A549 (cell line): ENCODE measurements at regions of chr3 and their contacts with region 1.

Region 1: DNA sequence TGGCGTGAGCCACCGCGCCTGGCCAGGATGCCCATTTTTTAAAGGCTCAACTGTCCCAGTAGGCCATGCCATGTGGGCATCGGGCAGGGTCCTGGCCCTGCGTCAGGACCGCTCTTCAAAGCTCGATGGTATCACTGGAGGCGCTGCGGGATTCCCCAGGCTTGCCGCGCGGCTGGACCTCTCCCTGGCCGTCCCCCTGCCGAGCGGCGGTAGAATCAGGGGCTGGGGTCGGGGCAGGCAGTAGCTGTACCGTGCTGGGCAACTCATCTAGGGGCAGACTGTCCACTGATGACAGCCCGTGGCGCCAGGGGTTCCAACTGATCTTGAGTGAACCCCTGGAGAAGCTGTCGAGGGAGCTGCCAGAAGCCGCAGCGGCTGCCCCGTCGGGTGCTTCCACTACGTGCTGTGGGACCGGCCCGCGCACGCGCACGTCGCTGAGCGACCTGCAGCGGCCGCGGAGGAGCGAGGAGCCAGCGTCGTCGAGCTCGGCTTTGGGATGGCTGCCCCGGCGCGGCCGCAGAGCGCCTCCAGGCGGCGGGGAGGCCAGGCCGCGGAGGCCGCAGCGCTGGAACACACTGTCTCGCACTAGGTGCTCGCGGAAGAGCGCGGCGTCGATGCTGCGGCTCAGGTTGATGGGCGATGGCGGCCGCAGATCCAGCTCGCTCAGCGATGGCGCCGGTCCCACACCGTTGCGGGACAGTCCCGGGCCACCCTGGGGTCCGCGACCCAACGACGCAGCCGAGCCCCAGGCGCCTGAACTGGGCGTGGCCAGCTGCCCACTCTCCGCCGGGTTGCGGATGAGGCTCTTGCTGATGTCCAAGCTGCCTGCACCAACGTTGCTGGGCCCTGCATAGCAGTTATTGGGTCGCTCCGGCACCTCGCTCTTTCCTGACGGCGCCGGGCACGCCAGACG is 5.8 kb downstream of the PRRT3 start:
- DNase-seq: peak; percentile 89 to 95
- ATAC-seq: peak; percentile 77 to 91
- H3K4me3 ChIP-seq: peak overlapping the region; percentile 80
- H3K27ac ChIP-seq: peak overlapping the region; percentile 95 to 98
- H3K4me1 ChIP-seq: peaks cover 10% of the 10 kb centered on the region; the same call in 1 of the 3 replicates
- CTCF ChIP-seq: peak; percentile 79
- EP300 ChIP-seq: no peak
- POLR2A ChIP-seq: peak; percentile 70
- RAD21 ChIP-seq: peak; percentile 72 to 73; a peak in 4 of 5 replicates

Region 2: GRCh38 chr3:9715764-9716437 is 230.5 kb before region 1 on chr3:
- CTCF ChIA-PET with region 1: interaction called, 12 read pairs
- POLR2A ChIA-PET with region 1: interaction called, 3 read pairs
- DNase-seq: peak; percentile 78 to 86
- ATAC-seq: peak; percentile 95 to 97
- H3K4me3 ChIP-seq: no peak overlapping the region
- H3K27ac ChIP-seq: peak overlapping the region in 1 of 2 experiments; percentile 32; a peak in 1 of 6 replicates
- H3K4me1 ChIP-seq: peaks cover 11% of the 10 kb centered on the region; the same call in 2 of the 3 replicates
- CTCF ChIP-seq: peak; percentile 87
- EP300 ChIP-seq: no peak
- POLR2A ChIP-seq: no peak
- RAD21 ChIP-seq: peak; percentile 89 to 91

Region 3: GRCh38 chr3:9843715-9844438 is 102.5 kb before region 1 on chr3 and contains the start of gene RPUSD3:
- CTCF ChIA-PET with region 1: interaction called, 55 read pairs
- POLR2A ChIA-PET with region 1: interaction called, 11 read pairs
- DNase-seq: peak; percentile 95 to 99
- ATAC-seq: peak; percentile 95 to 98
- H3K4me3 ChIP-seq: peak within 1 kb of the TSS; percentile 79
- H3K27ac ChIP-seq: peak within 1 kb of the TSS; percentile 85 to 89
- H3K4me1 ChIP-seq: peaks cover 11% of the 10 kb centered on the region; the same call in 2 of the 3 replicates
- CTCF ChIP-seq: no peak
- EP300 ChIP-seq: no peak
- POLR2A ChIP-seq: peak; percentile 82
- RAD21 ChIP-seq: 0 out of 5 replicates have a peak, but pooled peaks of 1 of the 2 experiments have one; percentile 14
- polyA plus RNA-seq, gene RPUSD3: 38.9 and 47.1 TPM in 2 replicates

Region 4: DNA sequence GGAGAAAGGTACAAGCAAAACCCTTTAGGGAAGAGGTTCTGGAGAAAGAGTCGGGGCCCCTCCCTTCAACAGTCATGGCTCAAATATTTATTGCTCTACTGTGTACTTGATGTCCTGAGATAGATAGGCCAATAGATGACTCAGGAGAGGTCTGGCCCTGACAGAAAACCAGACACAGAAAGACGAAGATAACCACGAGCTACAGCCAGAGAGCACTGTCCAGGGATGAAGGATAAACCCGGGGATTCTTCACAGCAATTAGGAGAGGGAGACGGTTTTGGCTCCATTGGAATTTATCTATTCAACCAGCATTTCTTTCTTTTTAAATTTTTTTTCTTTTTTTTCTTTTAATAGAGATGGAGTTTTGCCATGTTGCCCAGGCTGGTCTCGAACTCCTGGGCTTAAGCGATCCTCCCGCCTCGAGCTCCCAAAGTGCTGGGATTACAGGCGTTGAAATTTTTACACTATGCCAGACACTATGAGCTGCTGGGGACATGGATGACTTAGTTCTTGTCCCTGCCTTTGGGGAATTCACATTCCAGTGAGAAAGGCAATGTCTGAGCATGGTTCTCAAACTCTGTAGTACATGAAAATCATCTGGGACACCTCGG is 61.7 kb before region 1 on chr3:
- CTCF ChIA-PET with region 1: interaction called, 20 read pairs
- POLR2A ChIA-PET with region 1: interaction called, 14 read pairs
- DNase-seq: peak; percentile 93 to 96
- ATAC-seq: peak; percentile 98 to 99
- H3K4me3 ChIP-seq: no peak overlapping the region
- H3K27ac ChIP-seq: peak overlapping the region; percentile 88 to 89
- H3K4me1 ChIP-seq: peaks cover 31% of the 10 kb centered on the region
- CTCF ChIP-seq: no peak
- EP300 ChIP-seq: no peak
- POLR2A ChIP-seq: no peak
- RAD21 ChIP-seq: peak in 1 of 2 experiments; percentile 22; a peak in 1 of 5 replicates

Region 5: GRCh38 chr3:9915254-9916141 is 30.9 kb before region 1 on chr3:
- CTCF ChIA-PET with region 1: interaction called, 14 read pairs
- POLR2A ChIA-PET with region 1: interaction called, 5 read pairs
- DNase-seq: no peak
- ATAC-seq: peak; percentile 10 to 24; a peak in 4 of 6 replicates
- H3K4me3 ChIP-seq: peak overlapping the region; percentile 43
- H3K27ac ChIP-seq: peak overlapping the region; percentile 84 to 89
- H3K4me1 ChIP-seq: peaks cover 40% of the 10 kb centered on the region
- CTCF ChIP-seq: no peak
- EP300 ChIP-seq: no peak
- POLR2A ChIP-seq: no peak; the same call in none of the 2 replicates
- RAD21 ChIP-seq: no peak

Region 6: DNA sequence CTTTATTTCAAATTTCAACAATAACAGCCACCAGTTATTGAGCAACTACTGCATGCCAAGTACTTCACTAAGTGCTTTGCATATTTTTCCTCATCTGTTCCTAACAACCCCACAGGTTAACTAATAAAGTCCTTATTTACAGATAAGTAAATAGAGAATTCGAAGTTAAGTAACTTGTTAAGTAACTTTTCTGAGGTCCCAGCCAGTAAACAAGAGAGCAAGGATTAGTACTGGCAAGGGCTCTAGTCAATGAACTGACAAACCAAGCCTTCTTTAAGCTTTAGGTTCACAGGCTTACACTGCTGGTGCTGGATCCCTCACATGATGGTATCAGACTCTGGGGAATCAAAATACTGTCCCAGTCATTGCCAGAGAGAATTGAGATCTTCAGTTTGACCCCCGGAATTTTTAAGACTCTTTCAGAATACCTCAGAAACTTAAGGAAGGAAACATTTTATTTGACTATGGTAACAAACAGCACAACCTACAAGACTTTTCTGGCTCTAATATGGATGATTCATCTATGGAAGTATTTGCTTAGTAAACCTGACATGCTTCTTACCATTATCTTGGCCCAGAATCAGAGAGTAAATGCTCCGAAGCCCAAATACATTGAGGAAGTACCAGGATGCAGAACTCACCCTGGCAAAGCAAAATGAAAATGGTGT is 23.8 kb after region 1 on chr3:
- CTCF ChIA-PET with region 1: interaction called, 34 read pairs
- POLR2A ChIA-PET with region 1: interaction called, 3 read pairs
- DNase-seq: peak in 1 of 2 experiments; percentile 55
- ATAC-seq: peak; percentile 90 to 91
- H3K4me3 ChIP-seq: no peak overlapping the region
- H3K27ac ChIP-seq: peak overlapping the region; percentile 62 to 72
- H3K4me1 ChIP-seq: peaks cover 33% of the 10 kb centered on the region
- CTCF ChIP-seq: no peak
- EP300 ChIP-seq: no peak
- POLR2A ChIP-seq: no peak
- RAD21 ChIP-seq: no peak

Region 7: GRCh38 chr3:9994086-9994844 is 47.9 kb after region 1 on chr3:
- CTCF ChIA-PET with region 1: no interaction called
- POLR2A ChIA-PET with region 1: no interaction called
- DNase-seq: no peak
- ATAC-seq: peak in 1 of 2 experiments; percentile 35; a peak in 1 of 6 replicates
- H3K4me3 ChIP-seq: no peak overlapping the region
- H3K27ac ChIP-seq: no peak overlapping the region
- H3K4me1 ChIP-seq: no peaks in the 10 kb centered on the region; the same call in 2 of the 3 replicates
- CTCF ChIP-seq: no peak
- EP300 ChIP-seq: no peak
- POLR2A ChIP-seq: no peak
- RAD21 ChIP-seq: no peak